Panc1 (cell line): ENCODE measurements at regions of chr10 and their contacts with region 1.

Region 1: GRCh38 chr10:73060738-73061635 is 35.7 kb downstream of the P4HA1 start:
- DNase-seq: no peak
- ATAC-seq: peak; percentile 94
- H3K4me3 ChIP-seq: no peak overlapping the region
- H3K27ac ChIP-seq: no peak overlapping the region
- H3K4me1 ChIP-seq: peaks cover 3% of the 10 kb centered on the region; the same call in 1 of the 2 replicates
- H3K27me3 ChIP-seq: no peaks in the 10 kb centered on the region
- CTCF ChIP-seq: peak; percentile 69; the same call in 1 of the 2 replicates

Region 2: DNA sequence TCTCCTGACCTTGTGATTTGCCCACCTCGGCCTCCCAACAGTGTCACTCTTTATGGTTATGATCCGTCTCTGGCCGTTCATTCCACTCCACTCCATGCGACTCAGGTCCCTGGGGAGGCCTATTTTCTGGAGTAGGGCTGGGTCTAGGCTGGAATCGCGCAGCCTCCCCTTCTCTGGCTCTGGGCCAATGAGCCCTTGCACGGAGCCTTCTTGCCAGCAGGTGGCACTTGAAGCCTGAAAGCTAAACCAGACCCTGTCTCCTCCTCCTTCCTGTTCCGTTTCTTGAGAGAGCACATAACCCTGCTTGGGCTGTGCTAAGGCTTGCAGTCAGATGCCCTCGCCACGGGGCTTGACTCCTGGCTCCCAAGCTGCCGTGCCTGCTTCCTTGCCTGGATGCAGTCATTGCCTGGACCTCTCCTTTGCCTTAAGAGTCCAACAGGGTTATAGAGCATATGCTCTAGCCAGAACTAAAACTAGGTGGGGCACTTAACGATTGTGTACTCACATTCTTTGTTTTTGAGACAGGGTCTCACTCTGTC is 696.7 kb before region 1 on chr10:
- CTCF ChIA-PET with region 1: interaction called, 3 read pairs
- POLR2A ChIA-PET with region 1: no interaction called
- in situ Hi-C with region 1: no loop called
- intact Hi-C with region 1: loop called (anchors 10 kb)
- DNase-seq: peak; percentile 81
- ATAC-seq: peak; percentile 96
- H3K4me3 ChIP-seq: 0 out of 4 replicates have a peak overlapping the region, but pooled peaks of 1 of the 2 experiments have one; percentile 3
- H3K27ac ChIP-seq: peak overlapping the region; percentile 71
- H3K4me1 ChIP-seq: peaks cover 7% of the 10 kb centered on the region; the same call in 1 of the 2 replicates
- H3K27me3 ChIP-seq: no peaks in the 10 kb centered on the region
- CTCF ChIP-seq: peak; percentile 97

Region 3: GRCh38 chr10:72637398-72637857 is 423.6 kb before region 1 on chr10:
- CTCF ChIA-PET with region 1: interaction called, 10 read pairs
- POLR2A ChIA-PET with region 1: no interaction called
- in situ Hi-C with region 1: no loop called
- intact Hi-C with region 1: no loop called
- DNase-seq: no peak
- ATAC-seq: no peak
- H3K4me3 ChIP-seq: no peak overlapping the region
- H3K27ac ChIP-seq: no peak overlapping the region
- H3K4me1 ChIP-seq: no peaks in the 10 kb centered on the region
- H3K27me3 ChIP-seq: no peaks in the 10 kb centered on the region
- CTCF ChIP-seq: no peak

Region 4: GRCh38 chr10:72665925-72666324 is 395.1 kb before region 1 on chr10:
- CTCF ChIA-PET with region 1: no interaction called
- POLR2A ChIA-PET with region 1: interaction called, 14 read pairs
- in situ Hi-C with region 1: no loop called
- intact Hi-C with region 1: no loop called
- DNase-seq: no peak
- ATAC-seq: no peak
- H3K4me3 ChIP-seq: no peak overlapping the region
- H3K27ac ChIP-seq: no peak overlapping the region
- H3K4me1 ChIP-seq: no peaks in the 10 kb centered on the region
- H3K27me3 ChIP-seq: no peaks in the 10 kb centered on the region
- CTCF ChIP-seq: no peak

Region 5: GRCh38 chr10:72875250-72876055 is 185.5 kb before region 1 on chr10:
- CTCF ChIA-PET with region 1: interaction called, 13 read pairs
- POLR2A ChIA-PET with region 1: no interaction called
- in situ Hi-C with region 1: no loop called
- intact Hi-C with region 1: no loop called
- DNase-seq: peak; percentile 24
- ATAC-seq: 0 out of 2 replicates have a peak, but pooled peaks have one; percentile 58
- H3K4me3 ChIP-seq: no peak overlapping the region
- H3K27ac ChIP-seq: no peak overlapping the region
- H3K4me1 ChIP-seq: no peaks in the 10 kb centered on the region
- H3K27me3 ChIP-seq: no peaks in the 10 kb centered on the region
- CTCF ChIP-seq: peak; percentile 81; the same call in 1 of the 2 replicates

Region 6: GRCh38 chr10:73017955-73018480 is 43.0 kb before region 1 on chr10:
- CTCF ChIA-PET with region 1: no interaction called
- POLR2A ChIA-PET with region 1: no interaction called
- in situ Hi-C with region 1: no loop called
- intact Hi-C with region 1: no loop called
- DNase-seq: no peak
- ATAC-seq: no peak
- H3K4me3 ChIP-seq: no peak overlapping the region
- H3K27ac ChIP-seq: no peak overlapping the region
- H3K4me1 ChIP-seq: no peaks in the 10 kb centered on the region
- H3K27me3 ChIP-seq: no peaks in the 10 kb centered on the region
- CTCF ChIP-seq: no peak

Region 7: DNA sequence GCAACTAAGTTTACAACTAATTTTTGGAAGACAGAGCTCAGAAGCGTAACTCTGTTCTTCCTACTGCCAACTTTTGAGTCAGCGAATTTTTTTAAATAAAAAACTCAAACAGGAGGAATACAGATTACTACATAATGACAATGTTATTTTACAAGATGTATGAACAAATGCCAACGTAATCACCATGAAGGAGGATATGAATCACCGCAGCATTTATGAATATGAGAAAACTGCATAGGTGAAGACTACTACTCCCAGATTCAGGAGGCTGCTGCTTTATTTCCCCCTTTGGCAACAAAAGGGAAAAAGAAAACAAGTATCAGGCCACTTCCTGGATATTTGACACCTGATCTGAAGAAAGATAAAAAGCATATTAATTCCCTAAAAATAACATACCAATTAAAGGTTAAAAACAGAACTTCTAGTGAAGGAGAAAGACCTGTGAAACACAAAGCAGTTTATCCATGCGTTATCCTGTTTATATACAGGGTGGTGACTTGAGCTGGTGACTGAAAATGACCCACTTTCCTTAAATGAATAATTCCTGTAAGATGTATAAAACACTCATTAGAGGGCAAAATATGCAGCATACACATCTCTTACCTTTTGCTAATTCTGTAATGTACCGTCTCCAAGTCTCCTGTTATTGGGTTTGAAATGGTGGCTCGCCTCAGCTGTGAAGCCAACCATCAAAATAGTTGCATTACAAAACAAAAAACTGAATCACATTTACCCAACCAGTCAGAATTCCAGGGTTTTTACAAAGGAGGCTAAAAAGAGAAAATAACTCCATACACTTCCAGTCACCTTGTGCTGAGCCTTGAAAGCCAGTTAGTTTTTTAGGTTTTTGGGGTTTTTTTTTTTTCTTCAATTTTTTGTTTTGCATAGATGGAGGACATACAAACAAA is 16.4 kb before region 1 on chr10:
- CTCF ChIA-PET with region 1: no interaction called
- POLR2A ChIA-PET with region 1: no interaction called
- in situ Hi-C with region 1: no loop called
- intact Hi-C with region 1: no loop called
- DNase-seq: peak; percentile 73
- ATAC-seq: peak; percentile 88
- H3K4me3 ChIP-seq: no peak overlapping the region
- H3K27ac ChIP-seq: no peak overlapping the region
- H3K4me1 ChIP-seq: peaks cover 8% of the 10 kb centered on the region
- H3K27me3 ChIP-seq: no peaks in the 10 kb centered on the region
- CTCF ChIP-seq: no peak